Esophagus muscularis mucosa (tissue), 4 donors: ENCODE measurements at regions of chr4 and their contacts with region 1.

Region 1: DNA sequence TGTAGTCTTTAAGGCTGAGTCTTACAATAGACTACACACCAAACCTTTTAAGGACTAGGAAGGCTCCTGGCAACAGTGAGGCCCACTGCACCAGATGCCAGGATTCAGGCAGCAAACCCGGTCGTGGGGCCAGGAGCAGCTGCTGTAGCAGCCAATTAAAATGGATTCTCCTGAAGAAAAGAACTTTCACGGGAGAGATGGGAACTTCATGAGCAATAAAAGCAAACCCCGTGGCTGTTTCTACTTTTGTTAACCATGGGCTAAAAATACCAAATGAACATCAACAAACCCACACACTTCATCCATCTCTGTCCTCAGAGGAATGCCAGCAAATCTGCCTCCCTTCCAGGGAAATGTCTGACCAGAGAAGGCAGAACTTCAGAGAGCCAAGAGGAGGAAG is 101.4 kb downstream of the BTC start:
- DNase-seq: no peak
- H3K4me3 ChIP-seq: no peak overlapping the region
- H3K27ac ChIP-seq: peak overlapping the region; percentile 77 to 83 (median 81)
- H3K4me1 ChIP-seq: peaks cover 0 to 48% (median 45%) of the 10 kb centered on the region in 4 donors
- H3K27me3 ChIP-seq: no peaks in the 10 kb centered on the region
- CTCF ChIP-seq: no peak
- EP300 ChIP-seq: no peak
- POLR2A ChIP-seq: no peak

Region 2: DNA sequence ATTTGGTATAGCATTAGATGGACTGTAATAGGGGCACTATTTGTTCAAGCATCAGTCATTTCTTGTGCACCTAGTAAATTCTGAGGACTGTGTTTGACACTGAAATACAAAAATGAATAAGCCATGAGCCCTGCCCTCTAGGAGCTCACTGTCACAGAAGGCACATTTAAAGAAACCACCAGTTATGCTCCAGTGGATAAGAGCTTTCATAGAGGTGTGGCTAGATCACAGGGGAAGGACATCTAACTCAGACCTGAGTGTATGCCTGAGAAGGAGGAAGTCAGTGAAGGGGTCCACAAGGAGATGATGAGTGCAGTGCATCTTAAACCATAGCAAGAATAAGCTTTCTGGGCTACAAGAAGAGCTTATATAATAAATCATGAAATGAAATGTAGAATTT is 61.2 kb after region 1 on chr4:
- intact Hi-C with region 1: loop called (anchors 10 kb)
- DNase-seq: no peak
- H3K4me3 ChIP-seq: no peak overlapping the region
- H3K27ac ChIP-seq: no peak overlapping the region
- H3K4me1 ChIP-seq: peaks cover 0 to 48% (median 36%) of the 10 kb centered on the region in 4 donors
- H3K27me3 ChIP-seq: no peaks in the 10 kb centered on the region
- CTCF ChIP-seq: no peak
- EP300 ChIP-seq: no peak
- POLR2A ChIP-seq: no peak